Activated B cell treated with CpG ODN at 0.5 μM for 24 hours (primary cell): ENCODE measurements at regions of chr2 and their contacts with region 1.

Region 1: DNA sequence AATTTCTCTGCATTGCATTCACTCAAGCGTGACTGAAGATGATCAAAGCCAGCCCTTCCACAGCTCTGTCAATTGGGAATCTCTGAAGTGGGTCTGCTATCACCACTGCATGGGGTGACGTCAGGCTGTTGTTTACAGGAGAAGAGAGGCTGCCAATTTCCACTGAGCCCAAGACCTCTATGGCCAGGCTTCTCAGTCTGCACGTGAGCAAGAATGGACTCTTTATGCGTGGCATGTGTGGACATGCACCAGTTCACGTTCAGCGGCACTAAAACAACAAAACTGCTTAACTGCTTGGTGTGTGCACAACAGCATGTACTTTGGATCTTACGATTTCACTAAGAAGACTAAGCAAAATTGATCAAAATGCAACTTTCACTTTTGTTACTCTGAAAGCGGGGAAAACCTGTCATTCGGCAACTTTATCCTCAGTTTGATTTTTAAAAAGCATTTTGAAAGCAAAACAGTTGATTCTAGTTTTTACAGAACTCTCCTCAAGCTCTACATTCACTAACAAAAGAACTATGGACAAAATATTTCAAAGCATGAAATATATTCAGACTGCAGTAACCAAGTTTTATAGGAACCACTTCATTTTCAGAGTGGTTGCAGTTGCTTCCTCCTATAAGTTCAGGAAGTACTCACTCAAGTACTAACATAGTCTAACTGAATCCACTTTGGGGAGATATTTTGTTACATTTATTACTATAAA is 77.0 kb upstream of the SERTAD2 start:
- DNase-seq: peak; percentile 24
- ATAC-seq: peak; percentile 45
- H3K4me3 Mint-ChIP-seq: peak overlapping the region; percentile 84
- H3K27ac Mint-ChIP-seq: peak overlapping the region; percentile 91
- H3K4me1 Mint-ChIP-seq: peaks cover 66% of the 10 kb centered on the region
- H3K27me3 Mint-ChIP-seq: no peaks in the 10 kb centered on the region
- CTCF ChIP-seq: no peak

Region 2: GRCh38 chr2:64661741-64662169 is 69.0 kb before region 1 on chr2:
- CTCF ChIA-PET with region 1: interaction called, 32 read pairs
- POLR2A ChIA-PET with region 1: interaction called, 19 read pairs
- intact Hi-C with region 1: loop called (anchors 1 kb)
- DNase-seq: no peak
- ATAC-seq: peak; percentile 28
- H3K4me3 Mint-ChIP-seq: peak overlapping the region; percentile 56
- H3K27ac Mint-ChIP-seq: peak overlapping the region; percentile 88
- H3K4me1 Mint-ChIP-seq: peaks cover 72% of the 10 kb centered on the region
- H3K27me3 Mint-ChIP-seq: no peaks in the 10 kb centered on the region
- CTCF ChIP-seq: no peak

Region 3: DNA sequence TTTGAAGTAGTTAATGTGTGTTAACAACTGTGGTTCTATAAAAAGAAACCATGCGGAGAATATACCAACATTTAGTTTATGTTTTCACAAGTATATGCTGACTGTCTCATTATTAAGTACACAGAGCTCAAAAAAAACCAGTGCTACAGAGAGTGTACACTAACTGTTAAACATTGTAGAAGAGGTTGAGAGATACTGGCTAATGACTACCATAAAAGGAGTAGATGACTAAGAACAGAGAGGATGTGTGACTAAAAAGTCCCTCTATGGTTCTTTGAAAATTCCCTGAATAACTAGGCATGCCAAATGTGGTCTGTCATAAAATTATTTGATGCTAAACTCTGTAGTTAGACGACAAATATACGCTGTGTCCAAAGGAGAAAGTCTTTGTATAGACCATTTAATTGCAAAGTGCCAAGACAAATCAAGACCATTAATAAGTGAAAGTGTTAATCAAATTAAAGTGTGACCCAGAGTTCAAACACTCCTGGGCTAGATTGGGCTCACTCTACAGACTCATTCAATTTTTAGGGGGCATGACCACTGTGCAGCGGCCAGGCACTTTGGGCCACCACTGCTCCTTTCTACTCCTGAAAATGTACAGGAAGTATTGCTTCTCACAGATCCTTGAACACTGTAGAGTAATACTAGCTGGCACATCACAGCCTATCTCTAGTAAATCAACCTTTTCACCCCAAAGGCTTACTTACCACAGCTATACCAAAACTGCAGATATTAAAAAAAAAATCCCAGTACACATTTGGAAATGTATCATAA is 31.9 kb before region 1 on chr2:
- CTCF ChIA-PET with region 1: no interaction called
- POLR2A ChIA-PET with region 1: interaction called, 5 read pairs
- intact Hi-C with region 1: loop called (anchors 2 kb)
- DNase-seq: no peak
- ATAC-seq: peak; percentile 86
- H3K4me3 Mint-ChIP-seq: peak overlapping the region; percentile 52
- H3K27ac Mint-ChIP-seq: peak overlapping the region; percentile 89
- H3K4me1 Mint-ChIP-seq: peaks cover 51% of the 10 kb centered on the region
- H3K27me3 Mint-ChIP-seq: no peaks in the 10 kb centered on the region
- CTCF ChIP-seq: no peak

Region 4: GRCh38 chr2:64831134-64831976 is 100.6 kb after region 1 on chr2:
- CTCF ChIA-PET with region 1: no interaction called
- POLR2A ChIA-PET with region 1: interaction called, 6 read pairs
- intact Hi-C with region 1: loop called (anchors 1 kb)
- DNase-seq: peak; percentile 75
- ATAC-seq: peak; percentile 96
- H3K4me3 Mint-ChIP-seq: peak overlapping the region; percentile 63
- H3K27ac Mint-ChIP-seq: peak overlapping the region; percentile 82
- H3K4me1 Mint-ChIP-seq: peaks cover 21% of the 10 kb centered on the region
- H3K27me3 Mint-ChIP-seq: no peaks in the 10 kb centered on the region
- CTCF ChIP-seq: no peak

Region 5: DNA sequence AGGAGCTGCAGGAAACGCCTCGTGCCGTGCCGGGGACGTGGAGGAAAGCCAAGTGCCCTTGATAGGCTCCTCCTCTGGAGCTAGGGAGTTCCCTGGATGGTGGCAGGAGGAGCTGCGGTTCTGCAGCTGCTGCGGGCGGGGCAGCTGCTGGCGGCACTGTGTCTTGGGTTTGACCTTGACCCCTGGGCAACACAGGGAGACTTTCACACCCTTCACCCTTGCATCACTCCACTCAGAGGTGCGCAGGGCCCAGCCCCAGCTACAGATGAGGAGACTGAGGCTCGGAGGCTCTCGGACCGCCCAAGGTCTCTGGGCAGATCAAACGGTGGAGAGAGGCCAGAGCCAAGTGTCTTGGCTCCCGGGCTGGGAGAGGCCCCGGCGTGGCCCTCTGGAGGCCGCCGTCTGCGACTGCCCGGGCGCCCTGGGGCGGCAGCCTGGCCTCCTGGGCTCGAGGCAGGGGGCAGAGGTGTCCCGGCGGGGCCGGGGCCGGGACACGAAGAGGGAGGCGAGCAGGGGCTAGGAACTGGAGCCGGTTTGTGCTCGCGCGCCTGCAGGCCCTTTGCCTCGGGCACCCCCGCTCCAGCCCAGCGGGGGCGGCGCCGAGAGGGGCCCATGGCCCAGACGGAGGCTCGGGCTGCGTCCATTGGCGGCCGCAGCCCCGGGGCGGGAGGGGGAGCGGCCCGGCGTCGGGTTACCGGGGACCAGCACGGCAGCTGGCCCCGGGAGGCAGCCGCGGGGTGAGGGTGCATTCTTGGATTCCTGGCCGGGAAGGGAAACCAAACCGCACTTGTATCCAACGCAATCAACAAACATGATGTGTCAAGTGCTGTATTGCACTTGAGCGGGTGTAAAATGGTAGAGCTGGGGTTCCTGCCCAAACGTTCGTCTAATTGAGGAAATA is 128.9 kb after region 1 on chr2:
- CTCF ChIA-PET with region 1: no interaction called
- POLR2A ChIA-PET with region 1: interaction called, 24 read pairs
- intact Hi-C with region 1: loop called (anchors 2 kb)
- DNase-seq: peak; percentile 44
- ATAC-seq: peak; percentile 19
- H3K4me3 Mint-ChIP-seq: peak overlapping the region; percentile 76
- H3K27ac Mint-ChIP-seq: peak overlapping the region; percentile 94
- H3K4me1 Mint-ChIP-seq: peaks cover 36% of the 10 kb centered on the region
- H3K27me3 Mint-ChIP-seq: no peaks in the 10 kb centered on the region
- CTCF ChIP-seq: no peak

Region 6: GRCh38 chr2:65039640-65040039 is 308.9 kb after region 1 on chr2:
- CTCF ChIA-PET with region 1: no interaction called
- POLR2A ChIA-PET with region 1: no interaction called
- intact Hi-C with region 1: no loop called
- DNase-seq: no peak
- ATAC-seq: no peak
- H3K4me3 Mint-ChIP-seq: no peak overlapping the region
- H3K27ac Mint-ChIP-seq: peak overlapping the region; percentile 2
- H3K4me1 Mint-ChIP-seq: peaks cover 11% of the 10 kb centered on the region
- H3K27me3 Mint-ChIP-seq: no peaks in the 10 kb centered on the region
- CTCF ChIP-seq: no peak